ENCODE measurements at regions of chr6 and their contacts with region 1.

Region 1: GRCh38 chr6:152267967-152268845 is 369.0 kb downstream of the SYNE1 start:
- DNase-seq: no peak
- H3K4me3 ChIP-seq: no peak overlapping the region
- CTCF ChIP-seq: peak; percentile 24

Region 2: DNA sequence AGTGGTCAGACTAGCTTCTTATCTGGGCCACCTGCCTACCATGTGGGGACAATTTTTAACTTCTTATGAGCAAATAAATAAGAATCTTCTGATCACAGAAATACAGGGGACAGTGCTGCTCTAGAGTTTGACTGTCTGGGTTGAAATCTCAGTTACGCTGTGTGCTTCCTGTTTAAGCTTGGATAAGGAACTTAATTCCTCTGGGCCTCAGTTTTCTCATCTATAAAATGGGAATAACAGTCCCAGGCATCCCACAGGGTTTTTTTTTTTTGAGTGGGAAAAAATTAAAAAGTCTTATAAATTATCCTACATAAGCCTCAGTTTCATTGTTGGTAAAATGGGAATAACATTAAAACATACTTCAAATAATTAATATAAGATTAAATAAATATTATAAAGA is 119.8 kb before region 1 on chr6:
- CTCF ChIA-PET with region 1: no interaction called
- POLR2A ChIA-PET with region 1: no interaction called
- DNase-seq: no peak
- H3K4me3 ChIP-seq: no peak overlapping the region
- CTCF ChIP-seq: no peak

Region 3: GRCh38 chr6:152244998-152245630 is 23.1 kb before region 1 on chr6:
- CTCF ChIA-PET with region 1: interaction called, 12 read pairs
- POLR2A ChIA-PET with region 1: no interaction called
- DNase-seq: no peak
- H3K4me3 ChIP-seq: no peak overlapping the region
- CTCF ChIP-seq: no peak

Region 4: GRCh38 chr6:152301764-152302568 is 33.8 kb after region 1 on chr6:
- CTCF ChIA-PET with region 1: interaction called, 13 read pairs
- POLR2A ChIA-PET with region 1: no interaction called
- DNase-seq: no peak
- H3K4me3 ChIP-seq: peak overlapping the region; percentile 68
- CTCF ChIP-seq: peak; percentile 73

Measured in AG04449 (cell line).